Sigmoid colon (tissue), 7 donors: ENCODE measurements at regions of chr6 and their contacts with region 1.

Region 1: DNA sequence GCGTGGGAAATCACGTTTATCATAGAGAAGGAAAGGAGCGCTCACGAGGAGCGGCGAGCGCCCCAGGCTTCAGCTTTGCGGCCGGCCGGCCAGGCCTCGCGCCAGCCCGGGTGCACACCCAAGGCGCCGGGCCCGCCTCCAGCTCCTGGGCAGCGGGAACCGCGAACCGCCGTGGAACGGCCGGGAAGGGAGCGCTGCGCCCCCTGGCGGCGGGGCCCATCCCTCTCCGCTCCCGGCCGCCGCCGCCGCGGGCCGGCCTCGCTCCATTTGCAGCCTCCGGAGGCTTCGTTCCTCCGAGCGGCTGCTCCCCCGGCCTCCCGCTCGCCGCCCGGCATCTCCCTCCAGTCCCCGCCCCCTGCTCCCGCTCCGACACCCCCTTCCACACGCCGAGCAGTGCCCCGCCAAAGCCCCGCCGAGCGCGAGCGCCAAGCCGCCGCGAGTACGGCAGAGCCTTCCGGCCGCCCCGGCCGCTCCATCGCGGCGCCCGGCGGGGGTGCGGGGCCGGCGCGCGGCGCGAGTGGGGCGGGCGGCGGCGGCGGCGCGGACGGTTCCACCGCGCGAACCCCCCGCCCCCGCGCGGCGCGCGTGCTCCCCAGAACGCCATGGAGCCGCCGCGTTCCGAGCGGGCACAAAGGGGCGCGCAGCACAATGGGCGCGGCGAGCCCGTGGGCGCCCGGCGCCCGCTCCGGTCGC is 956 bp downstream of the BEND3 start:
- DNase-seq: peak; percentile 90
- H3K4me3 ChIP-seq: peak overlapping the region; percentile 41 to 77 (median 74)
- H3K27ac ChIP-seq: peak overlapping the region; percentile 52 to 82 (median 77)
- H3K4me1 ChIP-seq: peaks cover 0 to 21% (median 17%) of the 10 kb centered on the region in 4 donors
- H3K27me3 ChIP-seq: peaks cover 5 to 30% (median 7%) of the 10 kb centered on the region in 3 donors
- CTCF ChIP-seq: peak in 2 of 4 experiments; percentile 40 to 89
- EP300 ChIP-seq: no peak
- POLR2A ChIP-seq: no peak

Region 2: GRCh38 chr6:106966229-106966628 is 148.1 kb before region 1 on chr6:
- intact Hi-C with region 1: no loop called
- DNase-seq: no peak
- H3K4me3 ChIP-seq: no peak overlapping the region
- H3K27ac ChIP-seq: no peak overlapping the region
- H3K4me1 ChIP-seq: no peaks in the 10 kb centered on the region
- H3K27me3 ChIP-seq: peaks cover 0 to 11% (median 0%) of the 10 kb centered on the region in 3 donors
- CTCF ChIP-seq: no peak
- EP300 ChIP-seq: no peak
- POLR2A ChIP-seq: no peak

Region 3: GRCh38 chr6:107033126-107033525 is 81.2 kb before region 1 on chr6:
- intact Hi-C with region 1: loop called (anchors 2 kb)
- DNase-seq: no peak
- H3K4me3 ChIP-seq: no peak overlapping the region
- H3K27ac ChIP-seq: no peak overlapping the region
- H3K4me1 ChIP-seq: peaks cover 0 to 23% (median 17%) of the 10 kb centered on the region in 4 donors
- H3K27me3 ChIP-seq: no peaks in the 10 kb centered on the region
- CTCF ChIP-seq: no peak
- EP300 ChIP-seq: no peak
- POLR2A ChIP-seq: no peak

Region 4: DNA sequence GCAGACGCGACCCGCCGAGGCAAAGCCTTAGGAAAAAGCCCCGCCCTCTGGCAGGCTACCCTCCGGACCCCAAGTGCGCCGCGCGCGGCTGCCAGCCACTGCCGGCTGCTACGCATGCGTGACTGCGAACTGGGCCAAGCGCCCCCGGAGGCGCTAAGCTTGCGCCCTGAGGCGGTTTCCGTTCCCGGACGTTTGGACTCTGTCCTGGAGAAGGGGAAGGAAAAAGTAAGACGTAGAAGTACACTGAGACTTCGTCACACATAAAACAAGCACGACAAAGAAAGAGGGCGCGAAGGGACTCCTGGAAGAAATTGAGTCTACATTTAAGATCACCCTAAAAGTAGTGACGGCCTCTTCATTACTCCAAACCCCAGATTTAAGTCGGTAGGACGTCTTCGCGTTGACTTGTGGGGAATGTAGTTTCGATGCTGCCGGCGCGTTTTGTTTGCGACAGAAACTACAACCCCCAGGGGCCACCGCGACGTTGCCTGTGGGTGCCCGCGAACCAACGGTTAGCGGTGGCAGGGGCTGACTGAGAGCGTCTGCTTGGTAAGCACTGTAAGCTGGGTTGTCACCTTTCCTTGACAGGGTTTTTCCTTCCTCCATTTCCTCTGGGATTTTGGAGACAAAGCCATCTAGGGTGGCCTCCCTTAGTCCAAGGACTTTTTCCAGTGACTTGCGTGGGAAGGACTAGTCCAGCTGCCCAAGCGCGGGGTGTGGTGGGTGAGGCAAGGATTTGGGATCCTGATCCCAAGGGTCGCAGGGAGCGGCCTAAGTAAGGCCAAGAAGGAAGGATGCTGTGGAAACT is 1980.9 kb after region 1 on chr6 and contains the start of gene CEP57L1:
- intact Hi-C with region 1: loop called (anchors 10 kb)
- DNase-seq: peak; percentile 99
- H3K4me3 ChIP-seq: peak within 1 kb of the TSS; percentile 71 to 77 (median 74)
- H3K27ac ChIP-seq: peak within 1 kb of the TSS; percentile 97 to 99 (median 98)
- H3K4me1 ChIP-seq: peaks cover 0 to 38% (median 26%) of the 10 kb centered on the region in 4 donors
- H3K27me3 ChIP-seq: no peaks in the 10 kb centered on the region
- CTCF ChIP-seq: no peak
- EP300 ChIP-seq: peak in 1 of 4 donors; percentile 19
- POLR2A ChIP-seq: peak; percentile 23 to 65
- total RNA-seq, gene CEP57L1: 12.6 to 21.0 (median 16.5) TPM